ENCODE measurements at regions of chr2 and their contacts with region 1.

Region 1: GRCh38 chr2:106771811-106772210 is 114.2 kb downstream of the ST6GAL2 start:
- DNase-seq: no peak

Region 2: DNA sequence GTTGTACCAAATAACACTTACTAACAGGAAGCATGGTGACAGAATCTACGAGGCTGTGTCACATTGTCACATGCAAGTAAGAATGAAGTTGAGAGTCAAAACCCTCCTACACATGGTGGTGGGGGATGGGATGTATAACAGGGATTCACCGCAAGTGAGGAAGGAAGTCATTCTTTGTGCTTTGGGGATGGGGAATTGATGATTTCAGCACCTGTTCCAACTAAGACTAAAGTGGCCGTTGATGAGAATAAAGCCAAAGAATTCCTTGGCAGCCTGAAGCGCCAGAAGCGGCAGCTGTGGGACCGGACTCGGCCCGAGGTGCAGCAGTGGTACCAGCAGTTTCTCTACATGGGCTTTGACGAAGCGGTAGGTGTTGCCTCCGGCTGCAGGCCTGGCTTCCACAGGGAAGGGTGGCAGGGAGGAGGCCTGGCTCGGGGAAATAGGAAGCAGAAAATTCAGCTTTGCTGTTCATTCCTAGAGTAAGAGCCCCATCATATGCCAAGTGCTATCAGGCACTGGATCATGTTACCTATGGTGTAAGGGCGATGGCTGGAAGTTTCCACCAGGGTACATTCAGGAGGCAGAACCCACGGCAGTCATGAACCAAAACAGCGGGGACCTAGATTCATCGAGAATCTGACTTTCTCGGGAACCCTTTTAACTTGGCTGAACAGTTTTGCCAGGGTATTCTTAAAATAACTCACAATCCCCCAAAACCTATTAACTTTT is 698.0 kb before region 1 on chr2:
- intact Hi-C with region 1: loop called in 1 of 2 experiments (anchors 2 kb)
- DNase-seq: no peak

Region 3: DNA sequence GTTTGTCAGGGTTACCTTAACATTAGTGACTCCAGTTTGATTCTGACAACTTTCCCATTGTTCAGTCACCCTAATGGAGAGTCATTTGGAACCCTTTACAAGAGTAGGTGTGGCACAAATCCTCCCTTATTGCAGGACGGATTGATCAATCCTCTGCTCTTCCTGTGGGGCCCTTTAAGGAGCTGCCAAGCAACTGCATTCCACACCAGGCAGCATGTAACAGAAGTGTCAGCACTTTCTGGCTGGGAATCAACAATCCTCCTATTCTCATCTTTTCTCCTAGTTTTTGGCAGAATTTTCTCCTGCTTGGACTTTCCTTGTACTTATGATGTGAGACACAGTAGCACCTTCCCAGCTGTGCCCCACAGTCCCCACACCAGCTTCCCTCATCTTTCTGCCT is 63.6 kb before region 1 on chr2:
- intact Hi-C with region 1: no loop called
- DNase-seq: no peak

Region 4: GRCh38 chr2:106839849-106840581 is 68.2 kb after region 1 on chr2:
- intact Hi-C with region 1: no loop called
- DNase-seq: no peak

Measured in posterior vena cava (tissue), 2 donors.